Naive thymus-derived CD4-positive, alpha-beta T cell (primary cell): ENCODE measurements at regions of chr13 and their contacts with region 1.

Region 1: GRCh38 chr13:48505597-48506091 is 27.2 kb downstream of the RCBTB2 start:
- DNase-seq: peak in 7 of 9 donors; percentile 73 to 88 (median 84)
- ATAC-seq: peak; percentile 85
- H3K4me3 ChIP-seq: peak overlapping the region; percentile 37
- H3K4me3 Mint-ChIP-seq: peak overlapping the region; percentile 51 to 86 (median 76)
- H3K27ac ChIP-seq: peak overlapping the region; percentile 59
- H3K27ac Mint-ChIP-seq: peak overlapping the region; percentile 83 to 98 (median 91)
- H3K4me1 ChIP-seq: peaks cover 34 to 47% of the 10 kb centered on the region in 2 donors
- H3K4me1 Mint-ChIP-seq: peaks cover 47 to 78% (median 61%) of the 10 kb centered on the region in 7 donors
- H3K27me3 ChIP-seq: no peaks in the 10 kb centered on the region
- H3K27me3 Mint-ChIP-seq: peaks cover 0 to 11% (median 0%) of the 10 kb centered on the region in 5 donors

Region 2: GRCh38 chr13:47564041-47564440 is 941.6 kb before region 1 on chr13:
- CTCF ChIA-PET with region 1: no interaction called
- POLR2A ChIA-PET with region 1: no interaction called
- intact Hi-C with region 1: no loop called
- DNase-seq: no peak
- ATAC-seq: no peak
- H3K4me3 ChIP-seq: no peak overlapping the region
- H3K4me3 Mint-ChIP-seq: no peak overlapping the region
- H3K27ac ChIP-seq: no peak overlapping the region
- H3K27ac Mint-ChIP-seq: no peak overlapping the region
- H3K4me1 ChIP-seq: no peaks in the 10 kb centered on the region
- H3K4me1 Mint-ChIP-seq: no peaks in the 10 kb centered on the region
- H3K27me3 ChIP-seq: no peaks in the 10 kb centered on the region
- H3K27me3 Mint-ChIP-seq: peaks cover 0 to 9% (median 5%) of the 10 kb centered on the region in 5 donors

Region 3: DNA sequence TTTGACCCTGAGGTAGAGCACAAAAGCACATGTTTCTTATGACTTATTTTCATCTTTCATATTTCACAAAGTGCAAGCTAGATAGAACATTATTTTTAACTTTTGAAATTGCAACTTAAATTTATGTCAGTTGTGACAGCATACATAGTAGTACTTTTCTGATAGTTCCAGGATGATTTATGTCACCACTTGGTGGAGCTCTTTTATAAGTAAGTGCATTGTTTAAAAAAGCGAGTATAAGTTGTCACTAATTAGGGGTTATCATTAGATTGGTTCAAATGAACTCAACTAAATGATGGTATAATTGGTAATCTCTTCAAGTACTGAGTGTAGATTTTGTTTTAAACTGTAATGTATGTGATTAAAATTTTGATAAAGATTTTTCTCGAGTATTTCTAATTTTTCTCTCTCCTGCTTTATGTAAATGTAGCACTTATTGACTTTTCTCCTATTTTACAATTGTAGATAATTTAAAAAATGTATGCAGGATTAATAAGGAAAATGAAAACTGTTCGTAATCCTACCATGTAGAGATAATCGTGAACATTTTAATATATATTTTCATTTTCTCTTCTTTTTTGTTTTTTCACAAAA is 171.0 kb before region 1 on chr13:
- CTCF ChIA-PET with region 1: no interaction called
- POLR2A ChIA-PET with region 1: no interaction called
- intact Hi-C with region 1: loop called (anchors 1 to 10 kb)
- DNase-seq: peak in 6 of 9 donors; percentile 27 to 64 (median 48)
- ATAC-seq: peak; percentile 79
- H3K4me3 ChIP-seq: no peak overlapping the region
- H3K4me3 Mint-ChIP-seq: no peak overlapping the region
- H3K27ac ChIP-seq: no peak overlapping the region
- H3K27ac Mint-ChIP-seq: no peak overlapping the region
- H3K4me1 ChIP-seq: no peaks in the 10 kb centered on the region
- H3K4me1 Mint-ChIP-seq: peaks cover 0 to 23% (median 5%) of the 10 kb centered on the region in 7 donors
- H3K27me3 ChIP-seq: no peaks in the 10 kb centered on the region
- H3K27me3 Mint-ChIP-seq: no peaks in the 10 kb centered on the region

Region 4: GRCh38 chr13:48400850-48401291 is 104.8 kb before region 1 on chr13:
- CTCF ChIA-PET with region 1: interaction called, 3 read pairs
- POLR2A ChIA-PET with region 1: interaction called, 5 read pairs
- intact Hi-C with region 1: loop called in 1 of 2 experiments (anchors 1 kb)
- DNase-seq: peak in 2 of 9 donors; percentile 36 to 42
- ATAC-seq: peak; percentile 74
- H3K4me3 ChIP-seq: no peak overlapping the region
- H3K4me3 Mint-ChIP-seq: peak overlapping the region; percentile 1 to 83 (median 54)
- H3K27ac ChIP-seq: peak overlapping the region; percentile 49
- H3K27ac Mint-ChIP-seq: peak overlapping the region; percentile 1 to 90 (median 50)
- H3K4me1 ChIP-seq: peaks cover 33 to 40% of the 10 kb centered on the region in 2 donors
- H3K4me1 Mint-ChIP-seq: peaks cover 23 to 78% (median 63%) of the 10 kb centered on the region in 7 donors
- H3K27me3 ChIP-seq: no peaks in the 10 kb centered on the region
- H3K27me3 Mint-ChIP-seq: no peaks in the 10 kb centered on the region

Region 5: GRCh38 chr13:48492470-48493065 is 13.1 kb before region 1 on chr13:
- CTCF ChIA-PET with region 1: no interaction called
- POLR2A ChIA-PET with region 1: interaction called, 64 read pairs
- intact Hi-C with region 1: loop called (anchors 1 kb)
- DNase-seq: peak; percentile 38 to 79 (median 74)
- ATAC-seq: peak; percentile 91
- H3K4me3 ChIP-seq: peak overlapping the region; percentile 73
- H3K4me3 Mint-ChIP-seq: no peak overlapping the region
- H3K27ac ChIP-seq: peak overlapping the region; percentile 74
- H3K27ac Mint-ChIP-seq: no peak overlapping the region
- H3K4me1 ChIP-seq: peaks cover 67% of the 10 kb centered on the region in 2 donors
- H3K4me1 Mint-ChIP-seq: peaks cover 1 to 55% (median 34%) of the 10 kb centered on the region in 7 donors
- H3K27me3 ChIP-seq: no peaks in the 10 kb centered on the region
- H3K27me3 Mint-ChIP-seq: no peaks in the 10 kb centered on the region

Region 6: GRCh38 chr13:48515732-48516131 is 10.1 kb after region 1 on chr13:
- CTCF ChIA-PET with region 1: interaction called, 3 read pairs
- POLR2A ChIA-PET with region 1: interaction called, 15 read pairs
- intact Hi-C with region 1: no loop called
- DNase-seq: no peak
- ATAC-seq: no peak
- H3K4me3 ChIP-seq: no peak overlapping the region
- H3K4me3 Mint-ChIP-seq: no peak overlapping the region
- H3K27ac ChIP-seq: no peak overlapping the region
- H3K27ac Mint-ChIP-seq: no peak overlapping the region
- H3K4me1 ChIP-seq: peaks cover 0 to under 1% of the 10 kb centered on the region in 2 donors
- H3K4me1 Mint-ChIP-seq: peaks cover 0 to 5% (median 1%) of the 10 kb centered on the region in 7 donors
- H3K27me3 ChIP-seq: no peaks in the 10 kb centered on the region
- H3K27me3 Mint-ChIP-seq: peaks cover 0 to 21% (median 0%) of the 10 kb centered on the region in 5 donors

Region 7: GRCh38 chr13:48562296-48563066 is 56.8 kb after region 1 on chr13:
- CTCF ChIA-PET with region 1: interaction called, 3 read pairs
- POLR2A ChIA-PET with region 1: interaction called, 8 read pairs
- intact Hi-C with region 1: loop called (anchors 1 kb)
- DNase-seq: peak in 8 of 9 donors; percentile 67 to 87 (median 79)
- ATAC-seq: peak; percentile 100
- H3K4me3 ChIP-seq: peak overlapping the region; percentile 12
- H3K4me3 Mint-ChIP-seq: peak overlapping the region in 9 of 10 donors; percentile 0 to 68 (median 54)
- H3K27ac ChIP-seq: no peak overlapping the region
- H3K27ac Mint-ChIP-seq: peak overlapping the region in 2 of 9 donors; percentile 71 to 82
- H3K4me1 ChIP-seq: peaks cover 22 to 31% of the 10 kb centered on the region in 2 donors
- H3K4me1 Mint-ChIP-seq: peaks cover 28 to 51% (median 36%) of the 10 kb centered on the region in 7 donors
- H3K27me3 ChIP-seq: no peaks in the 10 kb centered on the region
- H3K27me3 Mint-ChIP-seq: peaks cover 7 to 67% (median 13%) of the 10 kb centered on the region in 5 donors

Region 8: GRCh38 chr13:49146950-49147355 is 641.3 kb after region 1 on chr13:
- CTCF ChIA-PET with region 1: no interaction called
- POLR2A ChIA-PET with region 1: no interaction called
- intact Hi-C with region 1: no loop called
- DNase-seq: peak in 7 of 9 donors; percentile 39 to 72 (median 57)
- ATAC-seq: peak; percentile 73
- H3K4me3 ChIP-seq: peak overlapping the region; percentile 54
- H3K4me3 Mint-ChIP-seq: peak overlapping the region; percentile 73 to 94 (median 86)
- H3K27ac ChIP-seq: peak overlapping the region; percentile 69
- H3K27ac Mint-ChIP-seq: peak overlapping the region; percentile 86 to 98 (median 96)
- H3K4me1 ChIP-seq: peaks cover 4 to 14% of the 10 kb centered on the region in 2 donors
- H3K4me1 Mint-ChIP-seq: peaks cover 17 to 70% (median 58%) of the 10 kb centered on the region in 7 donors
- H3K27me3 ChIP-seq: no peaks in the 10 kb centered on the region
- H3K27me3 Mint-ChIP-seq: no peaks in the 10 kb centered on the region